Gastrocnemius medialis (tissue), 4 donors: ENCODE measurements at regions of chr13 and their contacts with region 1.

Region 1: DNA sequence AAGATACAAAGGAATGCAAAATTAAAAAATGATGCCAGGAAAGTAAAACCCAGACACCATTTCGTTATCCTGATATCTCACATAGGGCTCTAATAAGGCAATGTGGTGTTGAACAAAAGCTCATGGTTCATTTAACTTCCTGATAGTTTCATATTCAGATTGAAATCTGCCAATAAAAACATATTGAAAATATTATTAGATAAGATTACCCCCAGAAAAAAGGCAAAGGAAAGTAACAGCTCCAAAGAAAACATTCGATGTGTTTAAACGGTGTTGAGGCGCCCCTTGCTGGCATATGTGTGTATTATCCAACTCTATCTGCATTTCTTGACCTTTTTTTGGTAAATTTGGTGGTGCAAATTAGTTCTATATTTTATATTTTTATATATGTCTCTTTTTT is 75.9 kb downstream of the ESD start:
- DNase-seq: peak in 1 of 2 donors; percentile 8
- ATAC-seq: no peak
- H3K4me3 ChIP-seq: no peak overlapping the region
- H3K27ac ChIP-seq: no peak overlapping the region
- H3K4me1 ChIP-seq: no peaks in the 10 kb centered on the region
- H3K27me3 ChIP-seq: no peaks in the 10 kb centered on the region
- CTCF ChIP-seq: peak; percentile 31 to 70 (median 61)
- POLR2A ChIP-seq: no peak

Region 2: DNA sequence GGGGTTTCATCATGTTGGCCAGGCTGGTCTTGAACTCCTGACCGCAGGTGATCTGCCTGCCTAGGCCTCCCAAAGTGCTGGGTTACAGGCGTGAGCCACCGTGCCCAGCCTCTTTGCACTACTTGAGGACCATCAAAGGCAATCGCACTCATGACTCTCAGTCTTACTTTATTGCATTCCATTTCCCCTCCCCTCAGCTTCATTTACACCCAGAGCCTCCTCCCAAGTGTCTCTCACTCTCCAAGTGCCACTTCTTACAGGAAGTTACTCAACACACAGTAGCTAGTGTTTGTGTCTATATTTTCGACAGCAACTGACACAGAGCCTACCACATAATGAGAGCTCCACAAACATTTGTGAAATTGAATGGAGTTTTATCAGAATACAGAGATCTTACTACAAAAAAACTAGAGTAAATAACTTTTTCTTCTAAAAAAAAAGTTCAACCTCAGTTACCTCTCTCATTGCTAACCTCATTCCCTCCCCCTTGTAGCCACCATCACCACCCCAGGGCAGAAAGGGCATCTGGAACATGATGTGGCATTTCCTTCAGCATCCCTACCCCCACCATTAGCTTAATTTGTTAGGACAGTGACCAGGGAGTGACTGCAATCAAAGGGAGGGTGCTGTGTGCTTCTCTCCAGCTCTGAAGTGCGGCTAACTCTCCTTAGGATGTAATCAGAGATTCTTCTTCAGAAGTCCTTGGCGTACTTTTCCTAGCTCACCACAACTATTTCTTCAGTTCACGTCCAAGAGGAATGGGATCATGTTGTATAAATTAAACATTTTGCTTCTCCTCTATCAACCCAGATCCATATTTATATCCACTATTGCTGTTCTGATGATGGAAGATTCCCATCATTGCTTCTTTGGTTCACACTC is 317.0 kb before region 1 on chr13:
- in situ Hi-C with region 1: no loop called
- intact Hi-C with region 1: no loop called
- DNase-seq: no peak
- ATAC-seq: peak in 1 of 2 donors; percentile 39
- H3K4me3 ChIP-seq: no peak overlapping the region
- H3K27ac ChIP-seq: no peak overlapping the region
- H3K4me1 ChIP-seq: no peaks in the 10 kb centered on the region
- H3K27me3 ChIP-seq: no peaks in the 10 kb centered on the region
- CTCF ChIP-seq: no peak
- POLR2A ChIP-seq: no peak

Region 3: GRCh38 chr13:46492946-46493345 is 228.1 kb before region 1 on chr13:
- in situ Hi-C with region 1: loop called in 3 of 4 experiments (anchors 5 to 10 kb)
- intact Hi-C with region 1: loop called (anchors 1 kb)
- DNase-seq: no peak
- ATAC-seq: no peak
- H3K4me3 ChIP-seq: no peak overlapping the region
- H3K27ac ChIP-seq: no peak overlapping the region
- H3K4me1 ChIP-seq: no peaks in the 10 kb centered on the region
- H3K27me3 ChIP-seq: no peaks in the 10 kb centered on the region
- CTCF ChIP-seq: peak; percentile 27 to 58 (median 41)
- POLR2A ChIP-seq: no peak

Region 4: DNA sequence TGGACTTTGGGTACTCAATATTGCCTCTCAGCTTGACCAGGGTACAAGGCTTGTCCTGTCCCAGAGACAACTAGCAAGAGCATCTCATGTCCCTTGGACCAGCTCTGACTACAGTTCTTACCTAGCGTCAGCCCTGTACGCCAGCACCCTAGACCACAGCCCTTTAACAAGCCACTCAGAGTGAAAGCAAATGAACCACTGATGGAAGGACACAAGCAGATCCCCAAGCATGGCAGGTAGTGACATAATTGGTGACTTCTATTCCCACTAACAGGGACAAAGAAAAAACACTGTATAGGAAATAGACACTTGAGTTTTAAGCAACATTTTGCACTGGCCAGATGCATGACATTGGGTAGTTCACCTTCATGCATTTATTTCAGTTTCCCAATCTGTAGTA is 176.8 kb before region 1 on chr13:
- in situ Hi-C with region 1: loop called in 1 of 4 experiments (anchors 10 kb)
- intact Hi-C with region 1: no loop called
- DNase-seq: no peak
- ATAC-seq: no peak
- H3K4me3 ChIP-seq: no peak overlapping the region
- H3K27ac ChIP-seq: no peak overlapping the region
- H3K4me1 ChIP-seq: no peaks in the 10 kb centered on the region
- H3K27me3 ChIP-seq: no peaks in the 10 kb centered on the region
- CTCF ChIP-seq: no peak
- POLR2A ChIP-seq: no peak

Region 5: GRCh38 chr13:46778890-46779289 is 57.8 kb after region 1 on chr13:
- in situ Hi-C with region 1: no loop called
- intact Hi-C with region 1: no loop called
- DNase-seq: no peak
- ATAC-seq: no peak
- H3K4me3 ChIP-seq: no peak overlapping the region
- H3K27ac ChIP-seq: no peak overlapping the region
- H3K4me1 ChIP-seq: no peaks in the 10 kb centered on the region
- H3K27me3 ChIP-seq: no peaks in the 10 kb centered on the region
- CTCF ChIP-seq: no peak
- POLR2A ChIP-seq: no peak